Lower leg skin (tissue), 4 donors: ENCODE measurements at regions of chr4 and their contacts with region 1.

Region 1: GRCh38 chr4:88661739-88662138 is 35.9 kb downstream of the NAP1L5 start:
- DNase-seq: no peak
- H3K4me3 ChIP-seq: no peak overlapping the region
- CTCF ChIP-seq: no peak
- POLR2A ChIP-seq: no peak

Region 2: GRCh38 chr4:88382621-88383020 is 279.1 kb before region 1 on chr4:
- intact Hi-C with region 1: no loop called
- DNase-seq: no peak
- H3K4me3 ChIP-seq: no peak overlapping the region
- CTCF ChIP-seq: no peak
- POLR2A ChIP-seq: no peak

Region 3: GRCh38 chr4:88533937-88534750 is 127.6 kb before region 1 on chr4:
- intact Hi-C with region 1: loop called (anchors 5 kb)
- DNase-seq: no peak
- H3K4me3 ChIP-seq: no peak overlapping the region
- CTCF ChIP-seq: no peak
- POLR2A ChIP-seq: no peak

Region 4: DNA sequence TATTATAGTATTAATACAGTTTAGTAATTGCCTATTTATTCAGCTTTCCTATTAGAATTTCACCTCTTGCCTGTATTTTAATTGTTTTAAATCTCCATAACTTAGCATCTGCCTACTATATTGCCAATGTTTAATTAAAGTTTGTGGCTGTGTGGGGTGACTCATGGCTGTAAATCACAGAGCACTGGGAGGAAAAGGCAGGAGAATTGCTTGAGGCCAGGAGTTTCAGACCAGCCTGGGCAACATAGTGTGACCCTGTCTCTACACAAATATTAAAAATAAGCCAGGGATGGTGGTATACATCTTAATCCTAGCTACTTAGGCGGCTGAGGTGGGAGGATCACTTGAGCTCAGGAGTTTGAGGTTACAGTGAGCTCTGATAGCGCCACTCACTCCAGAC is 1451.0 kb after region 1 on chr4:
- intact Hi-C with region 1: no loop called
- DNase-seq: no peak
- H3K4me3 ChIP-seq: no peak overlapping the region
- CTCF ChIP-seq: no peak
- POLR2A ChIP-seq: no peak